WTC11 (cell line): ENCODE measurements at regions of chr12 and their contacts with region 1.

Region 1: DNA sequence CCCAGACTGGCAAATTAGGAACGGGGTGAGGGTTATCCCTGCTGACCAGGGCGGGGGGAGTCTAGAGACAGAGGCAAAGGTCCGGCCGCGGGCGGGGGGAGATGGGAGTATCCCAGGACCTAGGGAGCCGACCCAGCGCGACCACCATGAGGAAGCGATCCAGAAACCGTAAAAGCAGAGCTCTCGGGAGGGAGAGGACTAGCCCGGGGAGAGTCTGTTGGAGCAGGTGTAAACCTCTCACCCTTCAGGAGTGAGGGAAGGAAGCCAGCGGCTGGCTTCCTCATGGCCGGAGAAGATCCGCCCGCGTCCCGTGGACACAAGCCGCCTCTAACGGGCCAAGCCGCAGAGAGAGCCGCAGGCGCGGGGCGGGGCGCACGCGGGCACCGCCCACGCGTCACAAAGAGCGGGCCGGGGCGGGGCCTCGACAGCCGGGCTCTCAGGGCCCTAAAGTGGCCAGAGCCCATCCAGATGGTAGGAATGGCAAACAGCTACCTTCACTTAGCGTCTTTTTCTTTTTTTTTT is at the start of gene ACRBP:
- DNase-seq: peak; percentile 76
- ATAC-seq: peak; percentile 92
- H3K4me3 Mint-ChIP-seq: peak within 1 kb of the TSS; percentile 87
- H3K27ac Mint-ChIP-seq: peak within 1 kb of the TSS; percentile 25
- H3K4me1 Mint-ChIP-seq: peaks cover 11% of the 10 kb centered on the region
- H3K27me3 Mint-ChIP-seq: peaks cover 29% of the 10 kb centered on the region
- CTCF ChIP-seq: no peak
- total RNA-seq, gene ACRBP: 2.1 to 4.2 TPM (median 3.2 TPM) in 3 replicates

Region 2: DNA sequence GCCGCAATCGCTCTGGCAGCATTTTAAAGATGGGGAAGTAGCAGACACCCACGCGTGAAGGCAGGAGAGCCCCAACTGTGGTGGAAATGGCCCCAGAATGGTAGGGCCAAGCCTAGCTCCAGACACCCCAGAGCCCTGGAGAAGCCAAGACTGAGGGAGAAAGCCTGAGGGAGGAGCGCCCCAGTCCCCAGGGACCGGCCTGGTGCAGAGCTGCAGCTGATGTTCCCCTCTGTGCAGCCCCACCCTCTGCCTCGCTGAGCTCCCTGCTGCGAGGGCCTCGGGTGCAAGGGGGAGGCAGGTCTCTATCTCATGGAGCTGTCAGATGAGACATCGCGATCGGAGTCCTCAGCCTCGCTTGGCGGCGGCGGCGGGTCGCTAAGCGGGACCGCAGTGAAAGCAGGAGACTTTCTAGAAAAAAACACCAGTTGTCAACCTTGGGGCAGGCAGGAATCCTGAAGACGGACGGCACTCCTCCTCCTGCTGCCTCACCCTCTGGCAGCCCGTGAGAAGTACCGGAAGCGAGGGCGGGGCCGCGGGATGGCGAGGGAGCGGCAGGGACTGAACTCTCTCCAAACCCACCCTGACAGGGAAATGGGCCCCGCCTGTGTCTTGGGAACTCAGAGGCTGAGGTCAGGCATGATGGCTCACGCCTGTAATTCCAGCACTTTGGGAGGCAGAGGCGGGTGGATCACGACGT is 106.8 kb before region 1 on chr12:
- CTCF ChIA-PET with region 1: interaction called, 11 read pairs
- POLR2A ChIA-PET with region 1: no interaction called
- DNase-seq: peak; percentile 88
- ATAC-seq: peak; percentile 55
- H3K4me3 Mint-ChIP-seq: peak overlapping the region; percentile 44
- H3K27ac Mint-ChIP-seq: peak overlapping the region; percentile 92
- H3K4me1 Mint-ChIP-seq: peaks cover 44% of the 10 kb centered on the region
- H3K27me3 Mint-ChIP-seq: no peaks in the 10 kb centered on the region; the same call in 1 of the 2 replicates
- CTCF ChIP-seq: no peak

Region 3: DNA sequence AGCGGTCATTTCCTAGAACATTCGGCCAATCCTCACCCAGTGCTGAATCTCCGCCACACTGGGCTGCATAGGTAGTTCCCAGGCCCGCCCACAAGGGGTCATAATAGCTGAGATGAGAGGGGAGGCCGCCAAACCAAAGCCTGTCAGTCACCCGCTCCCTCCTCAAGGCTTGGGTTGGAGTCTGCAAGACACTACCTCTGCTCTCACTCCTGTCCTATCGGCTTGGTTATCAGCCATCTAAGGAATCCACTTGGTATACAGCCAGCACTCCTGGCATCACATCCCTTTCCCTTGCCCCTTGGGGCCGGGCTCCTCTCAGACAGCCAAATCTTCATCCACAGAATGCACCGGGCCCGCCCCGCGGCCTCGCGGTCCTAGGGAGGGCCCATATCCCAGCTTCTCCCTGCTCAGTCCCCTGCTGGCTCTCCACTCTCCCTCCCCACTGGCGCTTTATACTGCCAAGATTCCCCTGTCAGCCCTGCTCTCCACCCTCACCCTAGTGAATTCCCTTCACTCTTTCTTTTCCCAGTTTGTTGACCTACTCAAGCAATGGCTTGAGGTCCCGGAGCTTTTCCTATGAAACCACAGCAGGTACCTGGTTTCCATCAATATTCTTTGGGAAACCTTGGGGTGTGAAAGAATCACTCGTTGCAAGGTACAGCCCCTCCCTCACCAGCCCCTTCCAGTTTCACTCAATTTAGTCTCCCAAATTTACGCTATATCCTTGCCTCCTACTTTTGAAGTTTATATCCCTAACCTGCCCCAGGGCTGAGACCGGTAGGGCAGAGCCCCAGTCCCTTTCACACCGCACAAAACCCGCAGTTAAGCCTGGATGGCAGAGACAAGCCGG is 92.8 kb before region 1 on chr12:
- CTCF ChIA-PET with region 1: interaction called, 10 read pairs
- POLR2A ChIA-PET with region 1: no interaction called
- DNase-seq: peak; percentile 93
- ATAC-seq: peak; percentile 79
- H3K4me3 Mint-ChIP-seq: peak overlapping the region; percentile 91
- H3K27ac Mint-ChIP-seq: peak overlapping the region; percentile 39
- H3K4me1 Mint-ChIP-seq: peaks cover 29% of the 10 kb centered on the region
- H3K27me3 Mint-ChIP-seq: no peaks in the 10 kb centered on the region
- CTCF ChIP-seq: peak; percentile 71

Region 4: GRCh38 chr12:6613776-6614512 is 33.2 kb before region 1 on chr12:
- CTCF ChIA-PET with region 1: interaction called, 111 read pairs
- POLR2A ChIA-PET with region 1: no interaction called
- DNase-seq: peak; percentile 91
- ATAC-seq: peak; percentile 86
- H3K4me3 Mint-ChIP-seq: peak overlapping the region; percentile 49
- H3K27ac Mint-ChIP-seq: peak overlapping the region; percentile 73
- H3K4me1 Mint-ChIP-seq: peaks cover 37% of the 10 kb centered on the region
- H3K27me3 Mint-ChIP-seq: peaks cover 7% of the 10 kb centered on the region
- CTCF ChIP-seq: no peak

Region 5: GRCh38 chr12:6632026-6632983 is 14.8 kb before region 1 on chr12:
- CTCF ChIA-PET with region 1: interaction called, 19 read pairs
- POLR2A ChIA-PET with region 1: interaction called, 4 read pairs
- DNase-seq: no peak
- ATAC-seq: no peak; the same call in 1 of the 2 replicates
- H3K4me3 Mint-ChIP-seq: no peak overlapping the region
- H3K27ac Mint-ChIP-seq: 0 out of 2 replicates have a peak overlapping the region, but pooled peaks have one; percentile 76
- H3K4me1 Mint-ChIP-seq: peaks cover 19% of the 10 kb centered on the region
- H3K27me3 Mint-ChIP-seq: peaks cover 3% of the 10 kb centered on the region
- CTCF ChIP-seq: no peak

Region 6: DNA sequence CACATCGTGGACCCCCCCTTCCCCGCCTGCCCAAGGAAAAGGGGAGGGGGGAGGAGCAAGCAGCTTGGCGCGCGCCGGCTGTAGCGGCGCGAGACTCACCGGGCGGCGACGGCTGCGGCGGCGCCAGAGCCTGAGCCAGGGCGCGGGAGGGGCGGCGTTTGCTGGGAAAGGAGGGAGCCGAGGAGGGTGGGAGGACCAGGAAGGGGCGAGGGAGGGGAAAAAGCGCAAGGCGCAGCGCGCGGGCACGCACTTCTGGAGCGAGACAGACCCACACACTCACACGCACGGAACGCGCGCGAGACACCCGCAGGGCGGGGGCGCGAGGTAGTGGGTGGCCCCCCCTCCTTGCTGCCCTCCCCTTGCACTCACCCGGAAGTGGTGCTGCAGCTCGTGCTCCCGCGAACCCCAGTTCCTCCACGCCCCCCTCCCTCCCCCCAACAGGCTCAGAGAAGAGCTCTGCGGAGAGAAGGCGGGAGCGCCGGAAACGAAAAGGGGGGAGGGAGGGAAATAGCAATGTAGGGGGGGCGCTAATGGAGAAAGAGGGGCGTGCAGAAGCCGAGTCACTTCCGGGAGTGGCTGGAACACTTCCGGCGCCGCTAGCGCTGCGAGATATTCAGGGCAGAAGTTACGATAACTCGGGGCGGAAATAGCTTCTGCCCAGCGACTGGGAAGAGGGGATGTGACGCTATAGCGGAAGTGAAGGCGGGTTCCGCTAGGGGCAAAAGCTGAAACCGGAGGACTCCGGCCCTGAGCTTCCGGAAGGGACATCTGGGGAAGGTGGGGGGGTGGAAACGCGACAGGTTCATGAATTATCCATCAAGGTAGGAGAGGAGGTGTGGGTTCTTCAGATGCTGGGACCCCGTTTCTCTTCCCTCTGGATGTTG is 42.1 kb after region 1 on chr12 and contains the start of gene ZNF384:
- CTCF ChIA-PET with region 1: interaction called, 10 read pairs
- POLR2A ChIA-PET with region 1: interaction called, 6 read pairs
- DNase-seq: peak; percentile 95
- ATAC-seq: peak; percentile 81
- H3K4me3 Mint-ChIP-seq: peak within 1 kb of the TSS; percentile 86
- H3K27ac Mint-ChIP-seq: peak within 1 kb of the TSS; percentile 95
- H3K4me1 Mint-ChIP-seq: peaks cover 23% of the 10 kb centered on the region
- H3K27me3 Mint-ChIP-seq: 0 out of 2 replicates have a peak, but pooled peaks cover under 1% of the 10 kb centered on the region
- CTCF ChIP-seq: no peak
- total RNA-seq, gene ZNF384: 63.8 to 64.7 TPM (median 64.4 TPM) in 3 replicates